ENCODE measurements at regions of chr7 and their contacts with region 1.

Region 1: GRCh38 chr7:45157653-45158401 is at the start of gene RAMP3:
- DNase-seq: no peak
- ATAC-seq: no peak
- H3K4me3 ChIP-seq: no peak within 1 kb of the TSS
- H3K27ac ChIP-seq: no peak within 1 kb of the TSS
- H3K4me1 ChIP-seq: no peaks in the 10 kb centered on the region
- H3K27me3 ChIP-seq: peaks cover 52% of the 10 kb centered on the region
- CTCF ChIP-seq: no peak
- POLR2A ChIP-seq: no peak
- RAD21 ChIP-seq: no peak
- total RNA-seq, gene RAMP3: not detected in 2 replicates

Region 2: DNA sequence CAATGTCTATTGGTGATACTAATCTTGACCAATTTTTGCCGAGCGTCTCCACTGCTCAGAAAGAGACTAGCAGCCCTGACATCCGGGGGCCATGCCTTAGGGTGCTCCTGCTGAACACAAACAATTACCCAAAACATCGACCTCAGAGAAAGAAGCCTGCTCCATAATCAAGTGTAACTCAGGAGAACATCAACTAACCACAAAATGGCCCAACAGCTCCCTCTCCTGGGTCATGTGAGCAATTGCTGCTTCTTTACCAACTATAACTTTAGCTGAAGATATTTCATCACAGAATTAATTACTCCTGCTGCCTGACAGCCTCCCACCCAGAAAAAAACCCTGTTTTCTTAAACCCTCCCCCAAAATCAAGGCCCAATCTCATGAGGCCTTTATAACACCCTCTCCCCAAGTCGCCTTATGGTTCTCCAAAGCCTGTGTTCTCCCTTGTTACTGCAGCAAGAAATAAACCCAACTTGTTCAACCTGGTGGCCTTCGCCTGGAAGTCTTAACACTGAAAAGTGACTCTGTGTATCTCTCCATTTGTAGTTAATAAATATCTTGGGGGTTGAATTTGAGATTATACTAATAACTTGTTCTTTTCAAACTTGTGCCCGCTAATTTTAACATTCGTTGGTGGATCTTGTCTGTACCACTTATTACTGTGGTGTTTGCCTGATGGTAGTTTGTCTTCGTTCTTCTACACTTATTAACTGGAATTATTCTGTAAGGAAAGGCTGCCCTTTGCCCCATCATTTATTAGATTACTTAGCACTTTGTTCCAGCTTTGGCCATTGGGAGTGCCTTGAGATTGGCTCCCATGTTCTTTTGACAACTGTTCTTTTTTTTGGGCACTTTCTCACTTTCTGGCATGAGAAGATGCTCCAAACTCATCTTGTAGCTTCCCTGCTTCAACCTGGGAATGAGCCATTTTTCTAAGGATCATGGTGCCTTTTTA is 21.4 kb before region 1 on chr7:
- CTCF ChIA-PET with region 1: no interaction called
- POLR2A ChIA-PET with region 1: no interaction called
- dilution Hi-C with region 1: no loop called
- in situ Hi-C with region 1: no loop called
- intact Hi-C with region 1: no loop called
- DNase-seq: peak; percentile 74
- ATAC-seq: peak; percentile 89
- H3K4me3 ChIP-seq: no peak overlapping the region
- H3K27ac ChIP-seq: no peak overlapping the region
- H3K4me1 ChIP-seq: no peaks in the 10 kb centered on the region
- H3K27me3 ChIP-seq: peaks cover 25% of the 10 kb centered on the region
- CTCF ChIP-seq: peak; percentile 96
- POLR2A ChIP-seq: 0 out of 2 replicates have a peak, but pooled peaks have one; percentile 18
- RAD21 ChIP-seq: peak; percentile 95

Region 3: DNA sequence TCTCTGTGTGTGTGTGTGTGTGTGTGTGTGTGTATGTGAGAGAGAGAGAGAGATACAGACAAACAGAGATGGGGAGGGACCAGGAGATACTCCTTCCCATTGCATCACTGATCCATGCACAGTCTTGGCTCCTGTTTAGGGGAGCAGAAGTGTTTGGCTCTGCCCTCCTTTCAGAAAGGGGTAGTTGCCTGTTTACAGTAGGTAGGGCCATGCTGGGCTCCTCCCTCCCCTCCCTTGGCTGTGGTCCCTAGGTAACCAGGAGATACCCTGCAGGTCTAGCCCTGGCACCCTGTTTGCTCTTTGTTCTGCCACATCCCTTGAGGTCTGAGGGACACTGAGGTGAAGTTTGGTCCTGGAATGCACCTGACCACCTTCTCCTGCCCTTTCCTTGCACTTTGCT is 95.0 kb after region 1 on chr7:
- CTCF ChIA-PET with region 1: no interaction called
- POLR2A ChIA-PET with region 1: no interaction called
- dilution Hi-C with region 1: no loop called
- in situ Hi-C with region 1: loop called (anchors 5 kb)
- intact Hi-C with region 1: no loop called
- DNase-seq: no peak
- ATAC-seq: no peak
- H3K4me3 ChIP-seq: no peak overlapping the region
- H3K27ac ChIP-seq: no peak overlapping the region
- H3K4me1 ChIP-seq: no peaks in the 10 kb centered on the region
- H3K27me3 ChIP-seq: peaks cover 2% of the 10 kb centered on the region; the same call in 1 of the 2 replicates
- CTCF ChIP-seq: no peak
- POLR2A ChIP-seq: no peak
- RAD21 ChIP-seq: no peak

Region 4: DNA sequence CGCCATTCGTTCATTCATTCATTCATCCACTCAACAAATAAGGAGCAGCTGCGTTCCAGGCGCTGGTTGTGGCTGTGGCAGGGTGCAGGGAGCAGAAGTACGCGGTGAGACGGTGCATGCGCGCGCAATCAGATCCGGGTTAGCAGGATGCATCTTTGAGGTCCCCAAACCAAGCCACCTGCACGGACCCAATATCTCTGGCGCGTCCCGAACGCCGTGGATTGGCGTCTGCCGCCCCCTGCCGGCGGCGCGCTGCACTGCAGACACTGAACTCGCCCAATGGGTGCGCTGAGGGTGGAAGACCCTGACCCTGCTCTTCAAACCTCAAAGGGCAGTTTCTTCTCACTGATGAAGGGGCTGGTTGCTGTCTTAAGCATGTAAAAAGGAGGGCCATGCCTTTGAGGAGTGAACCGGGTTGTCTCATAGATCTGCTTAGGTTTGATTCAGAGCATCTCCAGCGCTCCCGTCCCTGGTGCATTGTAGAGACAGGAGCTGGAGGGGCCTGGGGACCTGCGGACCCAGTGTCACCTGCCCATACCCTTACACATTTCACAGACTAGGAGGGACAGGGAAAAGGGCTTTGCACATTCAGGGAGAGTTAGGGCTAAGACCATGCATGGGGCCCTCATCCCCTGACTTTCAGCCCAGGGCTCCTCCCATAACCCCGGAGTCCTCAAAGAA is 102.3 kb after region 1 on chr7:
- CTCF ChIA-PET with region 1: no interaction called
- POLR2A ChIA-PET with region 1: no interaction called
- dilution Hi-C with region 1: no loop called
- in situ Hi-C with region 1: no loop called
- intact Hi-C with region 1: loop called (anchors 1 kb)
- DNase-seq: peak; percentile 7
- ATAC-seq: peak; percentile 95
- H3K4me3 ChIP-seq: no peak overlapping the region
- H3K27ac ChIP-seq: no peak overlapping the region
- H3K4me1 ChIP-seq: no peaks in the 10 kb centered on the region
- H3K27me3 ChIP-seq: peaks cover 5% of the 10 kb centered on the region
- CTCF ChIP-seq: peak; percentile 87
- POLR2A ChIP-seq: no peak
- RAD21 ChIP-seq: peak; percentile 83

Region 5: DNA sequence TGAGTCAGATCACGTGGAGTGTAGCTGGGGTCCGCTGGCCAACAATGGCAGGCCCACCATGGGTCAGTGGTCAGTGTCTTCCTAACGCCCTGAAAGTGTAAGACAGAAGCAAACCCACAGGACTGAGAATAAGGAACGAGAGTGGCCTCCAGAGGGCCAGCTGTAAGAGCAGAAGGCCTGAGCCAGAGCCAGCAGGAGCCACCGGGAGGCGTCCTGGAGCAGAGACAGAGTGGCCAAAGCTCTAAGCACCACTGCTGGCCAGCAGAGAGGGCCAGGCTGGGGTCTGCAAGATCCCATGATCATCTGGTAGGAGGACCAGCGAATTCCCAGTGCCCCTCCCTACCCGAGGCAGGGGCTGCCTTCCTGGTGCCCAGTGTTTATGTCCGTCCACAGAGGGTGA is 705.9 kb after region 1 on chr7:
- CTCF ChIA-PET with region 1: no interaction called
- POLR2A ChIA-PET with region 1: no interaction called
- dilution Hi-C with region 1: no loop called
- in situ Hi-C with region 1: loop called (anchors 10 kb)
- intact Hi-C with region 1: no loop called
- DNase-seq: no peak
- ATAC-seq: no peak
- H3K4me3 ChIP-seq: no peak overlapping the region
- H3K27ac ChIP-seq: no peak overlapping the region
- H3K4me1 ChIP-seq: no peaks in the 10 kb centered on the region
- H3K27me3 ChIP-seq: peaks cover 29% of the 10 kb centered on the region
- CTCF ChIP-seq: peak; percentile 34
- POLR2A ChIP-seq: no peak
- RAD21 ChIP-seq: no peak

Region 6: GRCh38 chr7:46047581-46047980 is 889.8 kb after region 1 on chr7:
- CTCF ChIA-PET with region 1: no interaction called
- POLR2A ChIA-PET with region 1: no interaction called
- dilution Hi-C with region 1: no loop called
- in situ Hi-C with region 1: no loop called
- intact Hi-C with region 1: no loop called
- DNase-seq: no peak
- ATAC-seq: no peak
- H3K4me3 ChIP-seq: no peak overlapping the region
- H3K27ac ChIP-seq: no peak overlapping the region
- H3K4me1 ChIP-seq: no peaks in the 10 kb centered on the region
- H3K27me3 ChIP-seq: no peaks in the 10 kb centered on the region
- CTCF ChIP-seq: no peak
- POLR2A ChIP-seq: no peak
- RAD21 ChIP-seq: no peak